Sigmoid colon (tissue), 7 donors: ENCODE measurements at regions of chr17 and their contacts with region 1.

Region 1: GRCh38 chr17:10499950-10500349 is 18.4 kb downstream of the MYH1 start:
- DNase-seq: no peak
- H3K4me3 ChIP-seq: no peak overlapping the region
- H3K27ac ChIP-seq: no peak overlapping the region
- H3K4me1 ChIP-seq: no peaks in the 10 kb centered on the region
- H3K27me3 ChIP-seq: no peaks in the 10 kb centered on the region
- CTCF ChIP-seq: no peak
- EP300 ChIP-seq: no peak
- POLR2A ChIP-seq: no peak

Region 2: DNA sequence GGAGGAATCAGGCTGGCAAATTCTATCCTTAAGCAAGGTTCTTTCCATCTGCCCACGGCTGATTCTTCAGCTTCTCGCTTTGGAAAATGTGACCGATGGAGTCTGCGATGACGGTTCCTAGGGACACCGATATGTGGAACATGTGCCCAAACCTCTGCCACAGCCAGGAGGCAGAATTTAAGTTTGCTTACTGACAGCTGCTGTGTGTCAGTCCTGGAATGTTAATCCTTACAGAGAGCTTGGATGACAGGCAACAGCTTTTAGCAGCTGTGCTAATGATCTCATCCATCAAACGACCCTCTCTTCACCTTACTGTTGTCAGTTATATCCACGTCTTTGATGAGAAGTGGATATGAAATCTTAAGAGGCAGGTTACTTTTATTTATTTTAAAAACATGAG is 115.8 kb before region 1 on chr17:
- intact Hi-C with region 1: no loop called
- DNase-seq: no peak
- H3K4me3 ChIP-seq: no peak overlapping the region
- H3K27ac ChIP-seq: no peak overlapping the region
- H3K4me1 ChIP-seq: peaks cover 0 to 13% (median 7%) of the 10 kb centered on the region in 4 donors
- H3K27me3 ChIP-seq: no peaks in the 10 kb centered on the region
- CTCF ChIP-seq: no peak
- EP300 ChIP-seq: no peak
- POLR2A ChIP-seq: no peak

Region 3: GRCh38 chr17:10557422-10557821 is 57.5 kb after region 1 on chr17:
- intact Hi-C with region 1: loop called (anchors 10 kb)
- DNase-seq: no peak
- H3K4me3 ChIP-seq: no peak overlapping the region
- H3K27ac ChIP-seq: no peak overlapping the region
- H3K4me1 ChIP-seq: peaks cover 0 to 21% (median 8%) of the 10 kb centered on the region in 4 donors
- H3K27me3 ChIP-seq: no peaks in the 10 kb centered on the region
- CTCF ChIP-seq: no peak
- EP300 ChIP-seq: no peak
- POLR2A ChIP-seq: no peak

Region 4: DNA sequence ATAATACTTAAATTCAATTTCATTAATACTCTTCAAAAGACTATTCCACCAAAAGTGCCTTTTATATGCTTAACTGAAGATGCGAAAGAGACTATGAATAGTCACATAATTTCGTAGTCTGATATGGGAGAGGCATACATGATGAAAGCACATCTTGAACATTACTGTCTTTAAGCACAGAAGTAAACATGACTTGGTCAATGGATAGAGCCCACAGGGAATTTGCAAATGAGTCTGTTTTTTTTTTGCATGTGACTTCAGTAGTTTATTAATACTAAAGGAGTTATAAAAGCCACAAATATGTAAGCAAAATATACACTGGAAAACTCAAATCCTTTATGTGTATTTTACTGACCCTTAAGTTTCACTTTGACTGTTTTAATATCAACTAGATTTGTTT is 213.4 kb after region 1 on chr17:
- intact Hi-C with region 1: no loop called
- DNase-seq: no peak
- H3K4me3 ChIP-seq: no peak overlapping the region
- H3K27ac ChIP-seq: no peak overlapping the region
- H3K4me1 ChIP-seq: no peaks in the 10 kb centered on the region
- H3K27me3 ChIP-seq: no peaks in the 10 kb centered on the region
- CTCF ChIP-seq: no peak
- EP300 ChIP-seq: no peak
- POLR2A ChIP-seq: no peak